Activated CD8-positive, alpha-beta memory T cell treated with anti-CD3 and anti-CD28 coated beads, Interleukin-2, amount 10 ng/mL, durations not matched to agents 7 days and 5 days (primary cell): ENCODE measurements at regions of chr3 and their contacts with region 1.

Region 1: DNA sequence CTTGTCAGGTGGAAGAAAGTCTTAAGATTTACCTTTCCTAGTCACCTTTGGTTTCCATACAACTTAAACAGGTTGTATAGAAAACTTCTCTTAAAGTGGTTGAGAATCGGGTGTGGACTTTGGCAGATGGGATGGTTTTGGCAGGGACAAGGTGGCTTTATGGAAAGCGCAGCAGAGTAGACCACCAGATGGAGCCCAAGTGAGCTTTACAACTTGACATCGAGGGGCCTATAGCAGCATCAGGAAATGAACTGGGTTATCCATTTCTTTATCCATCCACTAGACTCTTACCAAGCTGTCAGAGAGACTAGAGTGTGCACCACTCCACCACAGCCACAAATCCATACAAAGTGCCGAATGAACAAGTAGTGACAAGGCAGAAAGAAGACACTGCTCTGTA is 85.3 kb upstream of the MBNL1 start:
- DNase-seq: peak; percentile 72
- ATAC-seq: peak; percentile 94
- H3K4me3 Mint-ChIP-seq: no peak overlapping the region
- H3K27ac Mint-ChIP-seq: no peak overlapping the region
- H3K4me1 Mint-ChIP-seq: peaks cover 46% of the 10 kb centered on the region
- H3K27me3 Mint-ChIP-seq: no peaks in the 10 kb centered on the region

Region 2: GRCh38 chr3:152193673-152194267 is 10.3 kb after region 1 on chr3:
- CTCF ChIA-PET with region 1: interaction called, 14 read pairs
- DNase-seq: peak; percentile 73
- ATAC-seq: peak; percentile 77
- H3K4me3 Mint-ChIP-seq: peak overlapping the region; percentile 77
- H3K27ac Mint-ChIP-seq: peak overlapping the region; percentile 99
- H3K4me1 Mint-ChIP-seq: peaks cover 80% of the 10 kb centered on the region
- H3K27me3 Mint-ChIP-seq: no peaks in the 10 kb centered on the region